Calu3 (cell line): ENCODE measurements at regions of chr12 and their contacts with region 1.

Region 1: DNA sequence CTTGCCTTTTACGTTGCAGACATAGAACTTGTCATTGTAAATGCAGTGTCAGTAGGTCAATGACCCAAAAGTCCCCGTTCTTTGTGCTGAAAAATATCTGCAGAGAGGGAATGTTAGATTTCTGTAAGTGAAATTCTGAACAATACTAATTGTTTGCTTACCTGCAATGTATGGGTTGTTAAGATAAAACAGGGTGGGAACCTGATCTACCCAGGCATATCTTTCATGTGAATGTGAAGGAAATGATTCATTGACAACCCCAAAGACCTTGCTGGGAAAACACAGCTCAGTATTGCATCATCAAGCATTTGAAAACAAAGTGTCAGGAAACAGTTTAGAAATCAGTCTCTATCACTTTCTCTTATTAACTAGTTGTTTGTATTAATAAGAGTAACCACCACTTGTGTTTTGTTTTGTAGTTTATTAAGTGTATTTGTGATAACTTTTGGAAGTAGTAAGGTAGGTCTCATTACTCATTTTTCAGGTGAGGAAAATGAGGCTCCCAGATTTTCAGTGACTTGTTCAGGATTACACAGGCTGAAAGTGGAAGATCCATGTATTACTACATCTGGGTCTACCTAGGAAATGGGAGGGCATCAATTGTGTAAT is 57.9 kb upstream of the SLC38A2 start:
- DNase-seq: peak; percentile 20
- H3K4me3 Mint-ChIP-seq: peak overlapping the region; percentile 4
- H3K27ac Mint-ChIP-seq: peak overlapping the region; percentile 91
- H3K4me1 Mint-ChIP-seq: peaks cover 33% of the 10 kb centered on the region
- H3K27me3 Mint-ChIP-seq: no peaks in the 10 kb centered on the region
- CTCF ChIP-seq: no peak

Region 2: GRCh38 chr12:46364777-46365580 is 65.5 kb before region 1 on chr12:
- CTCF ChIA-PET with region 1: interaction called, 4 read pairs
- intact Hi-C with region 1: loop called (anchors 5 kb)
- DNase-seq: peak; percentile 62
- H3K4me3 Mint-ChIP-seq: peak overlapping the region; percentile 53
- H3K27ac Mint-ChIP-seq: peak overlapping the region; percentile 50
- H3K4me1 Mint-ChIP-seq: peaks cover 16% of the 10 kb centered on the region
- H3K27me3 Mint-ChIP-seq: no peaks in the 10 kb centered on the region
- CTCF ChIP-seq: no peak

Region 3: GRCh38 chr12:46383654-46384450 is 46.6 kb before region 1 on chr12:
- CTCF ChIA-PET with region 1: interaction called, 3 read pairs
- intact Hi-C with region 1: loop called (anchors 2 kb)
- DNase-seq: peak; percentile 69
- H3K4me3 Mint-ChIP-seq: peak overlapping the region; percentile 89
- H3K27ac Mint-ChIP-seq: peak overlapping the region; percentile 95
- H3K4me1 Mint-ChIP-seq: peaks cover 16% of the 10 kb centered on the region
- H3K27me3 Mint-ChIP-seq: no peaks in the 10 kb centered on the region
- CTCF ChIP-seq: no peak

Region 4: DNA sequence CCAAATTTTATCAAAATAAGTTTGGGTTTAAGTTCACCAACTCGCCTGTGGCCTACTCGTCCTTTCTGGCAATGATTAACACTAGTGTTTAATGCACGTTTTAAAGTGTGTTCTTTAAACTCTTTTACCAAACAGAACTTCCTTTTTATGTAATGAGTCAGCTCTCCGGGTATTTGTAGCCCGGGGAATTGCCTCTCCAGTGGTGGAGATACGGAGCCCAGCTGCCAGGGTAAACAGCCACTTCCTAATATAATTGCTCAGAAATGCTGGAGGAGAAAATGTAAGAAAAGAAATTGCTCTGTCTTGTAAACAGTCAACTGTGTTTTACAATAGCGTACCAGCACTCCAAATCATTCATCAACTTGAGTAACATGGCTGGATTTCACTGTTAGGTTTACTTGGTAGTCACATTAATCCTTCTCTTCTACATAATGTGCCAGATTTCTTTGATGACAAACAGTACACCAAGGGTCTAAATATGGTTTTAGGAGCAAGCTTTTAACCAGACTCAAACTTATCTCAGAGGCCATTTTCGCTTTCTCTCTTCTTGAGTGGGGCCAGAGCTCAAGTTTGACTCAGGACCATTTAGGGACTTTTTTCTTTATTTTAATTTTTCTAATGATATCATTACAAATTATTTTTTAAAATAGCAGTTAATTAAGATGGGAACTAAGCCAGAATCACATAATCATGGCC is 43.3 kb after region 1 on chr12:
- CTCF ChIA-PET with region 1: no interaction called
- intact Hi-C with region 1: loop called (anchors 5 kb)
- DNase-seq: peak; percentile 56
- H3K4me3 Mint-ChIP-seq: peak overlapping the region; percentile 36
- H3K27ac Mint-ChIP-seq: peak overlapping the region; percentile 64
- H3K4me1 Mint-ChIP-seq: peaks cover 49% of the 10 kb centered on the region
- H3K27me3 Mint-ChIP-seq: no peaks in the 10 kb centered on the region
- CTCF ChIP-seq: no peak